Transverse colon (tissue), 4 donors: ENCODE measurements at regions of chr5 and their contacts with region 1.

Region 1: GRCh38 chr5:10627160-10627701 is 63.4 kb downstream of the ANKRD33B start:
- DNase-seq: no peak
- H3K4me3 ChIP-seq: peak overlapping the region in 2 of 4 donors; percentile 12 to 22
- H3K27ac ChIP-seq: peak overlapping the region; percentile 37 to 70 (median 56)
- H3K4me1 ChIP-seq: peaks cover 10 to 46% (median 15%) of the 10 kb centered on the region in 4 donors
- H3K27me3 ChIP-seq: no peaks in the 10 kb centered on the region
- CTCF ChIP-seq: no peak
- EP300 ChIP-seq: no peak
- POLR2A ChIP-seq: no peak

Region 2: DNA sequence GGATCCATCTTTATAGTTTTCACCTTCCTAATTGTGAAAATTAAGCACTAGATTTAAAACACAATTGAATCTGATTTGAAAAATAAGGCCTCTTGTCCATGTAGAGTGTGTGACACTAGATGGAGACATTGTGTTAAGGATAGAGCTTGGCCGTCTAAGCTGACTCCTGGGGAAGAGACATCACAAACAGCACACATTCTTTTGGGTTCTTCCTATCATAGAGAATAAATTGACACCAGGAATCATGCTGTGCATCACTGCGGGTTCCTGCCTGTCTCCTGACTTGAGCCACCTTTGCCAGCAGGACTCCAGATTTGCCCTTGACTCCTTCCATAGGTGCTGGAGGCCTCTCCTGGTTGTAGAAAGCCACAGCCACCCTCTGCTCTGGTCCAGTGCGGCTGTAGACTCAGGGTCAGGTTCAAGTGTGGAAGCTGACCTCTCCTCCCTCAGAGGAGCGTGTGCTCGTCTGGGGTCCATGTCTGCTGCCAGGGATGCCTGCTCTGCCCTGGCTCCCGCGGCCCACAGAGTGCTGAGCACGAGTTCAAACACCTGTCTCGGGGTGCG is 174.4 kb before region 1 on chr5:
- in situ Hi-C with region 1: loop called (anchors 5 kb)
- intact Hi-C with region 1: loop called (anchors 5 kb)
- DNase-seq: no peak
- H3K4me3 ChIP-seq: no peak overlapping the region
- H3K27ac ChIP-seq: no peak overlapping the region
- H3K4me1 ChIP-seq: peaks cover 0 to 2% (median 0%) of the 10 kb centered on the region in 4 donors
- H3K27me3 ChIP-seq: no peaks in the 10 kb centered on the region
- CTCF ChIP-seq: peak; percentile 43 to 79 (median 67)
- EP300 ChIP-seq: no peak
- POLR2A ChIP-seq: no peak

Region 3: GRCh38 chr5:10607666-10608073 is 19.6 kb before region 1 on chr5:
- in situ Hi-C with region 1: no loop called
- intact Hi-C with region 1: no loop called
- DNase-seq: peak; percentile 45
- H3K4me3 ChIP-seq: no peak overlapping the region
- H3K27ac ChIP-seq: peak overlapping the region; percentile 36 to 57 (median 47)
- H3K4me1 ChIP-seq: peaks cover 0 to 18% (median 7%) of the 10 kb centered on the region in 4 donors
- H3K27me3 ChIP-seq: no peaks in the 10 kb centered on the region
- CTCF ChIP-seq: peak in 1 of 5 experiments; percentile 5
- EP300 ChIP-seq: no peak
- POLR2A ChIP-seq: no peak

Region 4: GRCh38 chr5:12095808-12096281 is 1468.6 kb after region 1 on chr5:
- in situ Hi-C with region 1: no loop called
- intact Hi-C with region 1: no loop called
- DNase-seq: no peak
- H3K4me3 ChIP-seq: no peak overlapping the region
- H3K27ac ChIP-seq: no peak overlapping the region
- H3K4me1 ChIP-seq: no peaks in the 10 kb centered on the region
- H3K27me3 ChIP-seq: no peaks in the 10 kb centered on the region
- CTCF ChIP-seq: no peak
- EP300 ChIP-seq: no peak
- POLR2A ChIP-seq: no peak